Endothelial cell of umbilical vein (primary cell): ENCODE measurements at regions of chr16 and their contacts with region 1.

Region 1: DNA sequence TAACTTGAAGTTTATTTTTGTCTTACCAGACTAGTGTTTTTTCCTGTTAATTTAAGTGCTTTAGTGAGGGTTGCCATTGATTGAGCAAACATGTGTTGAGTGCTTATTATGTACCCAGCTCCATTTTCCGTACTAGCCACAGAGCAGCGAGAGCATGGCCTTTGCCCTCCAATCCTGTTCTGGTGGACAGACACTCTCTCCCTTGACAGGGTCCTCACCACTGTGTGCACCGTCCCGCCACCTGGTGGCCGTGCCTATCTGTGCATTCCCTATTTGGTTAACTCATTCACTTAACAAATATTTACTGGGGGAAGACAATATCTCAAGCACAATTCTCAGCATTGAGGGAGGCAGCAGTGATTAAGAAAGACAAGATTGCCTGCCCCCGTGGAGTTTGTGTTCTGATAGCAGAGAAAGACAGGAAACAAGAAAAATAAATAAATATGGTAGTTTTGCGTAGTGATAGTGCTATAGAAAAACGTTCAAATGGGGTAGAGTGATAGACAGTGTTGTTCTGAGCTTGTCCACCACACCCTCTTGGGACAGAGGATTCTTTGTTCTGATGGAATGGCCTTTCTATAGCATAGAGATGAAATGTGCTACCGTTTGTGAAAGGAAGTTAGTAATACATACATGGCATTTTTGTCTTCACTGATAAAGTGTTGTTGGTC is 13.0 kb downstream of the CDH13 start:
- DNase-seq: peak; percentile 85
- H3K4me3 ChIP-seq: no peak overlapping the region
- H3K27ac ChIP-seq: peak overlapping the region; percentile 99
- H3K4me1 ChIP-seq: peaks cover 56% of the 10 kb centered on the region
- H3K27me3 ChIP-seq: no peaks in the 10 kb centered on the region
- CTCF ChIP-seq: peak; percentile 80 to 82
- POLR2A ChIP-seq: no peak

Region 2: DNA sequence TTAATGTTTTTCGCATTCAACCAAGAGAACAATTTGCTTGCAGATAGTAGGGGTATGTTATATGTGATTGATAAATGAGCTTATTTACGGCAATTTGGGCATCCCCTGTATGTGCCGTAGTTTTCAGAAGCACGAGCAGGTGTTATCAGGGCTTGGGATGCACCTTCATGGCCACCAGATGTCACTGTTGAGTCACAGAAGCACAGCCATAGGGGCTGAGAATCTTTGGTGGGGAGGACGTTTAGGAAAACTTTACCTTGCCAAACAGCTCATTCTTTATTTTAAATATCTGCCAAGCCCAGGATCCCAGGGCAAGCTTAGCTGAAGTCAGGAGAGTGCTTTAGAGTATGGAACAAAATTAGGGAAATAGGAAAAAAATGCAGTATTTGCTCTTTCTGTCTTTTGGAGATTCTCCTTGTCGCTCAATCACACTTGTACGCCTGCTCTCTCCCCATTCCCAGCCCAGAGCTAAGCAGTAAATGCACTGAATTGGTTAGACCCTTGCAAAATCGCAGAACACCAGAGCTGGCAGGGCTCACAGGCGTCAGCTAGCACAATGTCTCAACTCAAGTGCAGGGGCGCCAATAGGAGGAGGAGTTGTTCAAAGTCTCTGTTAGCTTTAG is 376.2 kb before region 1 on chr16:
- CTCF ChIA-PET with region 1: interaction called, 3 read pairs
- POLR2A ChIA-PET with region 1: no interaction called
- dilution Hi-C with region 1: no loop called
- intact Hi-C with region 1: loop called (anchors 5 kb)
- DNase-seq: peak; percentile 55
- H3K4me3 ChIP-seq: no peak overlapping the region
- H3K27ac ChIP-seq: no peak overlapping the region
- H3K4me1 ChIP-seq: no peaks in the 10 kb centered on the region
- H3K27me3 ChIP-seq: peaks cover 4 to 13% of the 10 kb centered on the region in 2 experiments
- CTCF ChIP-seq: peak; percentile 84 to 85
- POLR2A ChIP-seq: no peak

Region 3: GRCh38 chr16:82653550-82654511 is 14.0 kb after region 1 on chr16:
- CTCF ChIA-PET with region 1: interaction called, 53 read pairs
- POLR2A ChIA-PET with region 1: interaction called, 5 read pairs
- dilution Hi-C with region 1: no loop called
- intact Hi-C with region 1: loop called (anchors 1 kb)
- DNase-seq: peak; percentile 84
- H3K4me3 ChIP-seq: peak overlapping the region in 1 of 3 experiments; percentile 7
- H3K27ac ChIP-seq: peak overlapping the region; percentile 91
- H3K4me1 ChIP-seq: peaks cover 65% of the 10 kb centered on the region
- H3K27me3 ChIP-seq: no peaks in the 10 kb centered on the region
- CTCF ChIP-seq: no peak
- POLR2A ChIP-seq: no peak

Region 4: DNA sequence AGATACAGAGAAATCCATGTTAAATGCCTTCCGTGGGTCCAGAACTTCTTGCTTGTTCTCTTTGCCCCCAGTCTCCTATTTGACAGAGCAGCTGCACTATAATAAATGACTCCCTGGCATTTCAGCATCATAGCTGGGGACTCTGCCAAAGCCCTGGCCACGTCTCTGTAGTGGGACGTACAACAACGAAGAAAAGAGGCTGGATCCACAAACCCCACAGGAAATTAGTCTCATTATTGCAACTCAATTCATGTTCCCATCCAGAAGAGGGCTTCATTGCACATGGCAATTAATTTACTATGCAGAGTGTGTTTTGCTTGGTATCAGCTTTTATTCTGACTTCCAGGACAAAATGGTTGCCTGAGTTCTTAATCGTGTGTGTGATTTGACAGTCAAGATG is 108.2 kb after region 1 on chr16:
- CTCF ChIA-PET with region 1: interaction called, 6 read pairs
- POLR2A ChIA-PET with region 1: no interaction called
- dilution Hi-C with region 1: no loop called
- intact Hi-C with region 1: loop called (anchors 1 kb)
- DNase-seq: peak; percentile 94
- H3K4me3 ChIP-seq: peak overlapping the region in 1 of 3 experiments; percentile 7
- H3K27ac ChIP-seq: peak overlapping the region; percentile 57
- H3K4me1 ChIP-seq: peaks cover 38% of the 10 kb centered on the region
- H3K27me3 ChIP-seq: no peaks in the 10 kb centered on the region
- CTCF ChIP-seq: peak; percentile 29 to 40
- POLR2A ChIP-seq: no peak

Region 5: DNA sequence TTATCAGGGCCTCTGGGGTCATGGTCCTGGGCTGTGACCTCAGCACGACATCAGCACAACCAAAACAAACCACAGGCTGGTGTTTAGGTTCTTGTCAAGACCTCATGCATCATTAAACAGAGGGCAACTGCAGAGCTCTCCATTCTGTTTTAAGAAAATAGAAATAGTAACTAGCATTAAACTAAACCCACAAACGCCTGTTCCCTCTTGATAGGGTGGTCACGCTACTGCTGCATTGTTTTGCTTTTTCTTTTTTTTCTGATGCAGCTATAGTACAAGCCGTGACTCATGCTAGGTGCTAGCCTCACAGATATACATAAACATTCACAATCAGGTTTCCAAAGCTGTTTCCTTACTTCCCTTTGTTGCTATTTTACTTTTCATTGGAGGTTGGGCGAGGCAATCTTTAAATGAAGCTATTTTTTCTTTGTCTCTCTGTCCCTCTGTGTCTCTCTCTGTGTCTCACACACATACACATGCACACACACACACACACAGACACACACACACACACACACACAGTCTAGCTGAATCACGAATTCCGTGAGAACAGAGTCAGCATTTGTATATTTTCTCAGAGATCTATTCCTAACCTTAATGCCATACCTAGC is 297.2 kb after region 1 on chr16:
- CTCF ChIA-PET with region 1: interaction called, 9 read pairs
- POLR2A ChIA-PET with region 1: no interaction called
- dilution Hi-C with region 1: no loop called
- intact Hi-C with region 1: loop called (anchors 1 kb)
- DNase-seq: peak; percentile 98
- H3K4me3 ChIP-seq: no peak overlapping the region
- H3K27ac ChIP-seq: peak overlapping the region; percentile 90
- H3K4me1 ChIP-seq: peaks cover 27% of the 10 kb centered on the region
- H3K27me3 ChIP-seq: no peaks in the 10 kb centered on the region
- CTCF ChIP-seq: no peak
- POLR2A ChIP-seq: peak; percentile 59

Region 6: GRCh38 chr16:83002351-83003334 is 362.8 kb after region 1 on chr16:
- CTCF ChIA-PET with region 1: no interaction called
- POLR2A ChIA-PET with region 1: no interaction called
- dilution Hi-C with region 1: no loop called
- intact Hi-C with region 1: loop called (anchors 2 kb)
- DNase-seq: peak; percentile 88
- H3K4me3 ChIP-seq: no peak overlapping the region
- H3K27ac ChIP-seq: peak overlapping the region; percentile 73
- H3K4me1 ChIP-seq: peaks cover 36% of the 10 kb centered on the region
- H3K27me3 ChIP-seq: no peaks in the 10 kb centered on the region
- CTCF ChIP-seq: no peak
- POLR2A ChIP-seq: peak; percentile 49

Region 7: GRCh38 chr16:83449861-83450260 is 810.1 kb after region 1 on chr16:
- CTCF ChIA-PET with region 1: interaction called, 3 read pairs
- POLR2A ChIA-PET with region 1: no interaction called
- dilution Hi-C with region 1: no loop called
- intact Hi-C with region 1: loop called (anchors 5 kb)
- DNase-seq: no peak
- H3K4me3 ChIP-seq: no peak overlapping the region
- H3K27ac ChIP-seq: no peak overlapping the region
- H3K4me1 ChIP-seq: no peaks in the 10 kb centered on the region
- H3K27me3 ChIP-seq: no peaks in the 10 kb centered on the region
- CTCF ChIP-seq: no peak
- POLR2A ChIP-seq: no peak